ENCODE measurements at regions of chr19 and their contacts with region 1.

Region 1: GRCh38 chr19:9914315-9915207 is 21.8 kb downstream of the OLFM2 start:
- DNase-seq: peak; percentile 66
- H3K4me3 ChIP-seq: peak overlapping the region; percentile 37
- H3K27ac ChIP-seq: no peak overlapping the region
- H3K4me1 ChIP-seq: no peaks in the 10 kb centered on the region
- H3K27me3 ChIP-seq: peaks cover 20% of the 10 kb centered on the region
- CTCF ChIP-seq: peak; percentile 37

Region 2: DNA sequence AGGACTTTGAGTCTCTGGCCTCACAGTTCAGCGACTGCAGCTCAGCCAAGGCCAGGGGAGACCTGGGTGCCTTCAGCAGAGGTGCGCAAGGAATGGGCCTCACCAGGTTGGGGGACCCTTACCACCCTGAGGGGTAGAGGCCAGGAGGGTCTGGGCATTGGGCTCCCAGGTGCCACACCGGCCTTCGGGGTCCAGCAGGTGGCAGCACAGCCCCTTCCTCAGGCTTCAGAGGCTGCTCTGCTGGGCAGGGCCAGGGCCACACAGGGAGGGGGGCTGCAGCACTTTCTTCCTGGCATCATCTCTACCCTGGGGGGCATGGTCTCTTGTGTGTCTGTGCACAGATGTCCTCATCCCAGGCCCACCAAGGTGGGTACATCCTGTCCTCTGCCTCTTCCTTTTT is 66.5 kb before region 1 on chr19:
- intact Hi-C with region 1: loop called (anchors 2 kb)
- DNase-seq: no peak
- H3K4me3 ChIP-seq: no peak overlapping the region
- H3K27ac ChIP-seq: no peak overlapping the region
- H3K4me1 ChIP-seq: no peaks in the 10 kb centered on the region
- H3K27me3 ChIP-seq: no peaks in the 10 kb centered on the region
- CTCF ChIP-seq: peak; percentile 24

Region 3: DNA sequence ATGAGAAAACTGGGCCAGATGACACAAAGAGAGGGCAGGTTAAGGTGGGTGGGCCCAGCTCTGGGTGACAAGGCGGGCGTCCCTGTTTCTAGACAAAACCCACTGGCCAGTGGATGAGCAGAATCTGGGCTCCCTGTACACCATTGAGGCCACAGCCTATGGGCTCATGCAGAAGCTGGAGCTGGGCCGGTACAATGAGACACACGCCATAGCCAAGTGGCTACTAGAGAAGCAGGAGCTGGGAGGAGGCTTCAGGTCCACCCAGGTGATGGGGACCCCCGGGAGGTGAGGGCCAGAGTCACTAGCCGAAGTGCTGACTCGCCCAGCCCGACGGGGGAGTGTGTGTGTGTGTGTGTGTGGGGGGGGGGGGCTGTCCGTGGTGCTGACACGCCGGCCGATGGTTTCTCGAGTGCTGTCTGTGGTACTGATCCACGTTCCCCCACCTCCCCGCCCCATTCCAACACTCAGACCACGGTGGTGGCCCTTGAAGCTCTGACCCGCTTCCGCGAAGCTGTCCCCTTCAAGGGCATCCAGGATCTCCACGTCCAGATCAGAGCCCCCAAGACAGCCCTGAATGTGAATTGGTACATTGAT is 147.3 kb after region 1 on chr19:
- intact Hi-C with region 1: no loop called
- DNase-seq: no peak
- H3K4me3 ChIP-seq: no peak overlapping the region
- H3K27ac ChIP-seq: no peak overlapping the region
- H3K4me1 ChIP-seq: no peaks in the 10 kb centered on the region
- H3K27me3 ChIP-seq: no peaks in the 10 kb centered on the region
- CTCF ChIP-seq: no peak

Measured in colonic mucosa (tissue), 4 donors.